ENCODE measurements at regions of chr13 and their contacts with region 1.

Region 1: GRCh38 chr13:21465710-21466160 is 6.6 kb upstream of the ZDHHC20 start:
- DNase-seq: no peak
- ATAC-seq: no peak
- H3K4me3 ChIP-seq: no peak overlapping the region
- H3K27ac ChIP-seq: no peak overlapping the region
- H3K4me1 ChIP-seq: no peaks in the 10 kb centered on the region
- H3K27me3 ChIP-seq: no peaks in the 10 kb centered on the region
- CTCF ChIP-seq: no peak

Region 2: DNA sequence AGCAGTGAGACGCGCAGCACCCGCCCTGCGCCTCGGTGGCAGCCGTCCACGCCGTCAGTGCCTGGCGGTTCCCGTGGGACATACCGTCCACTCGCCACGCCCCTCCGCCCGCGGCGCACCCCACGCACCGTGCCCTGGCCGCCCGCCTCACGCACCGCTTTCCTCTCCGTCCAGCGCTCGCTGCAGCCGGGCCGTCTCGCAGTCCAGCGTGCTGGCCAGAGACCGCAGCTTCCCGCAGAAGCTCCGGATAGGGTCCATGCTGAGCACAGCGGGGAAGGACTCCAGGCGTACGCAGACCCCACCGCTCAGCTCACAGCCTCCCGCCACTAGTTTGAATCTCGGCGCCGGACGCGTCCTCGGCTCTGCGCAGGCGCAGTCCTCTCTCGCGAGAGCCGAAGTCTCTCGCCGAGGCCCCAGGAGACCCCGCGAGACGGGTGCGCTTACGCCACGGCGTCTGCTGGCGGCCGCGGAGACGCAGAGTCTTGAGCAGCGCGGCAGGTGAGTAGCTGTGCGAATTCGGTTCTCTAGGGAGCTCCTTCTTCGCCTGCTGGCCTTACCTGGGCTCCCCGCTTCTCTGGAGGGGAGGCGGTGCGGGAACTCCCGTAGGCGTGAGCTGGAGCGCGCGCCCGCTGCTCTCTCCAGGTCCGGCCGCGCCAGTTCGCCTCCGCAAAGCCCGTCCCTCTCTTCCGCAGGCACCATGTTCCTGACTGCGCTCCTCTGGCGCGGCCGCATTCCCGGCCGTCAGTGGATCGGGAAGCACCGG is 289.3 kb before region 1 on chr13 and contains the starts of genes MRPL57 and SKA3:
- intact Hi-C with region 1: loop called in 1 of 10 experiments (anchors 10 kb)
- DNase-seq: peak; percentile 90 to 94
- ATAC-seq: peak; percentile 98 to 100 (median 99)
- H3K4me3 ChIP-seq: peak within 1 kb of the TSS; percentile 72 to 98 (median 84)
- H3K27ac ChIP-seq: peak within 1 kb of the TSS; percentile 92 to 99 (median 96)
- H3K4me1 ChIP-seq: peaks cover 3 to 29% (median 16%) of the 10 kb centered on the region in 9 donors
- H3K27me3 ChIP-seq: no peaks in the 10 kb centered on the region
- CTCF ChIP-seq: peak in 4 of 9 donors; percentile 15 to 31 (median 22)
- total RNA-seq, gene MRPL57: 20.0 to 25.9 (median 22.9) TPM
- total RNA-seq, gene SKA3: 0.07 to 1.8 (median 0.23) TPM in 9 of 10 donors, not detected in the other